Breast epithelium (tissue), 4 donors: ENCODE measurements at regions of chr12 and their contacts with region 1.

Region 1: DNA sequence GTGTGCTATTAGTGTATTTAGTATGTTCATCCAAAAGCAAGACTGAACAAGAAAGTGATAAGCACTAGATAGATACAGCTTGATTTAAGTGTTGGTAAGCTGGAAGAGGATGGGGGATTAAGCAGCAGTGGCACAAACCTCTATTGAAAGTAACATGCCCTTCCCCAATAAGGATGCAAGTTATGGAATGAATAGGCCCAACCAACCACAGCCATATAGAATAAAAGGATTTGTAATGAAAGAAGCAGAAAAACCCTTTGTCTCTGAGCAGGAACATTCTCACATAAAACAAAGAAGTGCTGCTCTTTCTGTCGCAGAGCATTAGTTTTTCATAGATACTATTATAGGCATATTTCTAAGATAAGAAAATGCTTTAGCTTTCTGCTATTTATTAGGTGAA is 310.7 kb downstream of the IPO8 start:
- DNase-seq: no peak
- H3K4me3 ChIP-seq: no peak overlapping the region
- H3K27ac ChIP-seq: no peak overlapping the region
- H3K4me1 ChIP-seq: no peaks in the 10 kb centered on the region
- H3K27me3 ChIP-seq: no peaks in the 10 kb centered on the region
- CTCF ChIP-seq: no peak
- POLR2A ChIP-seq: no peak

Region 2: GRCh38 chr12:30414507-30414906 is 29.5 kb after region 1 on chr12:
- intact Hi-C with region 1: loop called (anchors 2 kb)
- DNase-seq: no peak
- H3K4me3 ChIP-seq: no peak overlapping the region
- H3K27ac ChIP-seq: no peak overlapping the region
- H3K4me1 ChIP-seq: no peaks in the 10 kb centered on the region
- H3K27me3 ChIP-seq: no peaks in the 10 kb centered on the region
- CTCF ChIP-seq: no peak
- POLR2A ChIP-seq: no peak

Region 3: DNA sequence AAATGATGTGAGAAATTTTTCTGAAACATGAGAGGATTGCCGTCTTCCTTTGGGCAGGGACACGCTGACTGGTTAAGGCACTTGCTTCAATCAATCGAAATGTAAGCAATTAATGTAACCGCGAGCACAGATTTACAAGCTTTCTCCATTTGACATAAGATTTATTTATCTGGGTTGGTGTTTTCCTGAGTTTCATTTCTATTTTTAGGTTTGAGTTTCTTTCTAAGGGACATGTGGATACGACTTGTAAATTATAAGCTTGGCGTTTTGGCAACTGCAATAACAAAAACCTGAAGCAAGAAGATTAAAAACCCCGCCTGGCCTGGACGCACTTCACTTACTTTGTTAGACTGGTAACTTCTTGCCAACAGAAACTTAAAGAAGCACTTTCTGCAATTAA is 961.3 kb after region 1 on chr12:
- intact Hi-C with region 1: no loop called
- DNase-seq: no peak
- H3K4me3 ChIP-seq: no peak overlapping the region
- H3K27ac ChIP-seq: no peak overlapping the region
- H3K4me1 ChIP-seq: no peaks in the 10 kb centered on the region
- H3K27me3 ChIP-seq: no peaks in the 10 kb centered on the region
- CTCF ChIP-seq: no peak
- POLR2A ChIP-seq: no peak